H1 (cell line): ENCODE measurements at regions of chr3 and their contacts with region 1.

Region 1: DNA sequence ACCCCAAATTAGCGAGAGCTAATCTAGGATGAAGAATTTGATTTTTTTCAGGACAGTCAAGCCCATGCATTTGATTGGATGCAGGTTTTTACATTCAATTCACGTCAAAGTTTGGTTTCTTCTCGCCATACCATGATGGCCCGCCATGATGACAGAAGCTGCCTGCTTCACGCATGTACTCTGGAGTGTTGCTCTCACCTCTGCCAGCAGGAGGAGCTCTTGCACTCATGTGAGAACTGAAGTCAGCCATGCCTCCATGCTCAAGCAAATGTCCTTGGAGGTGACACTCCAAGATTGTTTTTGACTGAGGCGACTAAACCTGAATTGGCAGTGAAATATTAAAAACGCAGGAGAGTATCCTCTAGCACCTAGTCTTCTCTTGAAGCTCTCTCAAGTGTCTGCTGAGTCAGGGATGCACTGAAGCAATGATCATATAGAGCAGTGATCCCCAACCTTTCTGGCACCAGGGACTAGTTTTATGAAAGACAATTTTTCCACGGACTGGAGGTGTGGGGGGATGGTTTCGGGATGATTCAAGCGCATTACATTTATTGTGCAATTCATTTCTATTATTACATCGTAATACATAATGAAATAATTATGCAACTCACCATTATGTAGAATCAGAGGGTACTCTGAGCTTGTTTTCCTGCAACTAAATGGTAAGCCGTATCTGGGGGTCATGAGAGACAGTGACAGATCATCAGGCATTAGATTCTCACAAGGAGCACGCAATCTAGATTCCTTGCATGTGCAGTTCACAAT is 121.0 kb downstream of the SAMMSON start:
- DNase-seq: peak; percentile 75 to 91
- H3K4me3 ChIP-seq: no peak overlapping the region
- H3K27ac ChIP-seq: no peak overlapping the region
- H3K4me1 ChIP-seq: no peaks in the 10 kb centered on the region
- H3K27me3 ChIP-seq: 0 out of 7 replicates have a peak, but pooled peaks cover 0 to 3% (median 0%) of the 10 kb centered on the region in 4 experiments
- CTCF ChIP-seq: peak; percentile 72 to 94 (median 86)
- EP300 ChIP-seq: no peak
- POLR2A ChIP-seq: no peak
- RAD21 ChIP-seq: peak; percentile 83 to 89

Region 2: GRCh38 chr3:70064194-70064779 is 56.3 kb before region 1 on chr3:
- CTCF ChIA-PET with region 1: interaction called, 15 read pairs
- POLR2A ChIA-PET with region 1: no interaction called
- DNase-seq: no peak
- H3K4me3 ChIP-seq: no peak overlapping the region
- H3K27ac ChIP-seq: no peak overlapping the region
- H3K4me1 ChIP-seq: no peaks in the 10 kb centered on the region
- H3K27me3 ChIP-seq: no peaks in the 10 kb centered on the region
- CTCF ChIP-seq: peak in 2 of 3 experiments; percentile 51 to 72; a peak in 2 of 4 replicates
- EP300 ChIP-seq: no peak
- POLR2A ChIP-seq: no peak
- RAD21 ChIP-seq: peak; percentile 83 to 85

Region 3: DNA sequence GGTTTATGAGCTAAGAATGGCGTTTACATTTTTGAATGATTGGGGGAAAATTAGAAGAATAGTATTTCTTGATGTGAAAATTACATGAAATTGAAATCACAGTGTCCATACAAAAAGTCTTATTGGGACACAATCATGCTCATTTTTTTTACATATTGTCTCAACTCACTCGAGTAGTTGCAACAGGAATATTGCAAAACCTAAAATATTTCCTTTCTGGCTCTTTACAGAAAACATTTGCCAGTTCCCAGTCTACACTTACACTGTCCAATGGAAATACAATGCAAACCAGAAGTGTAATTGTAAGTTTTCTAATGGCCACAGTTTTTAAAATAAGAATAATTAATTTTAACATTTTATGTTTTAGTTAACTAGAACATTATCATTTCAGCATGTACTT is 16.8 kb after region 1 on chr3:
- CTCF ChIA-PET with region 1: interaction called, 34 read pairs
- POLR2A ChIA-PET with region 1: no interaction called
- DNase-seq: no peak
- H3K4me3 ChIP-seq: no peak overlapping the region
- H3K27ac ChIP-seq: no peak overlapping the region
- H3K4me1 ChIP-seq: no peaks in the 10 kb centered on the region
- H3K27me3 ChIP-seq: no peaks in the 10 kb centered on the region
- CTCF ChIP-seq: no peak
- EP300 ChIP-seq: no peak
- POLR2A ChIP-seq: no peak
- RAD21 ChIP-seq: no peak

Region 4: DNA sequence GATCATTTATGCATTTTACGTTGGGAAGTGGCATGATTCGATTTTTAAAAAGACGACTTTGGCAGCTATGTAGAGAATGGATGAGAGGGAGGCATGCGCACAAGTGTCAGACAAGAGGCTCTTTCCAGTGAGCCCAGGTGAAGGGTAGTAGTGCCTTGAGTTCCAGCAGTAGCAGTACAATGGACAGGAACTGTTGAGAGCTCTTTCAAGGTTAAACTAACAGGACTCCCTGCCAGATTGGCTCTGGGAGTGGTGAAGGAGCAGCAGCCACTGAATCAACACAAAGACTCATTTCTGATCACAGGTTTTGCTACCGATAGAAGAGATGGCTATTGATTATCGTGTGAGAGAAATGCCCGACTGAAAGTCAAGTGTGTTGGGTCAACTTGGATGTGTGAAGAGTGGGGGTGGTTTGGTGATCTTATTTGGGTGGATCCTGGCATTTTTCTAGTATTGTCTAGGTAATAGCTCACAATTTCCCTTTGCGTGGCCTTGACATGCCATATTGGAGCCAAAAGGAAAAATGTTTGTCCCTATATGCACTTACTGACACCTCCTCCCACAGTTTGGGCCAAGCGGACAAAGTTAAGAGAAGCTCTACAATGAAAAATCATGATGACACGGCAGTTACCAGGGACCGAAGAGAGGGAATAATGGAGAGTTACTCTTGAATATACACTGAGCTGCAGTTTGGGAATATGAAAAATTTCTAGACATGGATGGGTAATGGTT is 273.5 kb after region 1 on chr3:
- CTCF ChIA-PET with region 1: interaction called, 10 read pairs
- POLR2A ChIA-PET with region 1: no interaction called
- DNase-seq: no peak
- H3K4me3 ChIP-seq: no peak overlapping the region
- H3K27ac ChIP-seq: no peak overlapping the region
- H3K4me1 ChIP-seq: no peaks in the 10 kb centered on the region
- H3K27me3 ChIP-seq: no peaks in the 10 kb centered on the region
- CTCF ChIP-seq: no peak
- EP300 ChIP-seq: no peak
- POLR2A ChIP-seq: no peak
- RAD21 ChIP-seq: no peak